ENCODE measurements at regions of chr5 and their contacts with region 1.

Region 1: GRCh38 chr5:59380350-59380951 is 513.1 kb downstream of the PDE4D start:
- DNase-seq: no peak
- ATAC-seq: peak in 3 of 4 donors; percentile 61 to 78 (median 62)
- H3K4me3 ChIP-seq: no peak overlapping the region
- H3K27ac ChIP-seq: no peak overlapping the region
- H3K4me1 ChIP-seq: peaks cover 0 to 5% (median 0%) of the 10 kb centered on the region in 12 donors
- H3K27me3 ChIP-seq: no peaks in the 10 kb centered on the region
- CTCF ChIP-seq: peak; percentile 23 to 68 (median 61)
- POLR2A ChIP-seq: no peak

Region 2: GRCh38 chr5:59188419-59189225 is 191.8 kb before region 1 on chr5:
- intact Hi-C with region 1: loop called in 6 of 10 experiments (anchors 1 to 5 kb)
- DNase-seq: peak; percentile 62 to 80 (median 73)
- ATAC-seq: peak; percentile 58 to 83 (median 80)
- H3K4me3 ChIP-seq: peak overlapping the region in 10 of 12 donors; percentile 2 to 51 (median 34)
- H3K27ac ChIP-seq: peak overlapping the region in 6 of 12 donors; percentile 14 to 76 (median 20)
- H3K4me1 ChIP-seq: peaks cover 0 to 29% (median 0%) of the 10 kb centered on the region in 12 donors
- H3K27me3 ChIP-seq: no peaks in the 10 kb centered on the region
- CTCF ChIP-seq: peak; percentile 77 to 92 (median 83)
- POLR2A ChIP-seq: no peak

Region 3: GRCh38 chr5:59193616-59194319 is 186.7 kb before region 1 on chr5:
- intact Hi-C with region 1: loop called in 6 of 10 experiments (anchors 1 to 5 kb)
- DNase-seq: peak in 2 of 5 donors; percentile 33 to 86
- ATAC-seq: peak; percentile 70 to 98 (median 90)
- H3K4me3 ChIP-seq: no peak overlapping the region
- H3K27ac ChIP-seq: peak overlapping the region in 3 of 12 donors; percentile 38 to 53 (median 44)
- H3K4me1 ChIP-seq: peaks cover 0 to 13% (median 0%) of the 10 kb centered on the region in 12 donors
- H3K27me3 ChIP-seq: no peaks in the 10 kb centered on the region
- CTCF ChIP-seq: no peak
- POLR2A ChIP-seq: no peak

Region 4: DNA sequence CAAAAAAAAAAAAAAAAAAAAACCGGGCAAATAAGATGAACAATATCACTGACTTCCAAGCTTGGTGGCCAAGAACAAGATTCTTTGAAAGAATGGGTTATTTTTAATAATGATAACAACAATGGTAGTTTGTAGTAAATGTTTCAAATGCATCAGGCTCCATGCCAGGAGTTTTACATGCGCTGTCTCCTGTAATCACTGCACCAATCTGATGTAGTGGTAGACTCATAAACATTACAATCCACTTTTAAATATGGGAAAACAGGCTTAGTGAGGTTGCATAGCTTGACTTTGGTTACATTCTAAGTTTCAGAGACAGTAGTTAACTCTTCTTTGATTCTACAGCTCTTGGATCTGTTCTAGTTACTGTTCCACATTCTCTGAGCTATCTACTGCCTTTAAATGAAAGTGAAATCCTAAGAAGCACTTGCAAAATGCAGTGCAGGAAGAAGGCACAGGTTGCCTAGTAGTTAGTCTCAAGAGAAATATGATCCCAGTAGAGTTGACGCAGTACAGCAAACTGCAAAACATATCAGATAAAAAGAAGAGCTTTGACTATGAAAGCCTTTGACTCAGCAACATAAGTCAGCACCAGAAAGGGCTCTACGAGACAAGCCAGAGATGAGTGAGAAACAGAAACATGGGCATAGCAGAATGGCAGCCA is 451.0 kb after region 1 on chr5:
- intact Hi-C with region 1: no loop called
- DNase-seq: no peak
- ATAC-seq: no peak
- H3K4me3 ChIP-seq: no peak overlapping the region
- H3K27ac ChIP-seq: no peak overlapping the region
- H3K4me1 ChIP-seq: peaks cover 0 to 16% (median 0%) of the 10 kb centered on the region in 12 donors
- H3K27me3 ChIP-seq: no peaks in the 10 kb centered on the region
- CTCF ChIP-seq: no peak
- POLR2A ChIP-seq: no peak

Measured in heart left ventricle (tissue), 16 donors.